Right ventricle myocardium superior (tissue), 1 donor: ENCODE measurements at regions of chr14 and their contacts with region 1.

Region 1: GRCh38 chr14:21103710-21104447 is 3.0 kb downstream of the TMEM253 start:
- DNase-seq: peak; percentile 97
- ATAC-seq: peak; percentile 96

Region 2: DNA sequence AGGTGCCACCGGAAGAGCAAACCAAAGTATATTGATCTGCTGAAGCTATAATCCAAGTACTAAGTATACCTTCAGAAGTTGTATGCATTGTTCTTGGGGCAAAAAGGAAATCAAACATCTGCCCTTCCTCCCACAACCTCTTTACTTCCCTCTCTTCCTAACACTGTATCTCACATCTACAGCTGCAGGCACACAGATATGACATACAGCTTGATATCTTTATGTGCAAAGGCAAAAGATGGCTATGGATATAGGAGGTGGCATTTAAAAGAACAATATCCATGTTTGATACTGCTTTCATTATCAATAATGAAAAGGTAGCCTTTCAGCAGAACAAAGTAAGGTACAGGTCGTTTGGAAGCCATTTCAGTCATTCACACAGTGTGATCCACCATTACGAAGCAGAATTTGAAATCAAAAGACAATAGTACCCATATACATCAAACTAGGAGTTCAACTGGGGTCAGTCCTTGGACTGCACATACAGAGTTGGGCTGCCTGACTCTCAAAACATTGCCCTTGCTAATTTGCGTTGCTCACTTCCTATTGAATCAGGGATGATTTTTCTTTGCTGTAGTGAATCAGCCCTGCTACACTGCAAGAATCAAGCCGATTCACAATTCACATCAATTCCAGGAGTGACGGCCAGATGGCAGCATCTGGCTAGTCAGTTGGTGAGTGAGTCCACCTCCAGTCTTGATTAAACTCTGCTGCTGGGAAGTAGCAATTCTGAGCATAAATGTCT is 406.4 kb before region 1 on chr14:
- intact Hi-C with region 1: loop called (anchors 5 kb)
- DNase-seq: peak; percentile 68
- ATAC-seq: peak; percentile 94

Region 3: GRCh38 chr14:21014761-21015190 is 89.1 kb before region 1 on chr14:
- intact Hi-C with region 1: loop called (anchors 5 kb)
- DNase-seq: peak; percentile 79
- ATAC-seq: peak; percentile 86

Region 4: GRCh38 chr14:21041676-21042433 is 62.0 kb before region 1 on chr14 and contains the start of gene RNASE7:
- intact Hi-C with region 1: no loop called
- DNase-seq: no peak
- ATAC-seq: no peak
- total RNA-seq, gene RNASE7: not detected

Region 5: DNA sequence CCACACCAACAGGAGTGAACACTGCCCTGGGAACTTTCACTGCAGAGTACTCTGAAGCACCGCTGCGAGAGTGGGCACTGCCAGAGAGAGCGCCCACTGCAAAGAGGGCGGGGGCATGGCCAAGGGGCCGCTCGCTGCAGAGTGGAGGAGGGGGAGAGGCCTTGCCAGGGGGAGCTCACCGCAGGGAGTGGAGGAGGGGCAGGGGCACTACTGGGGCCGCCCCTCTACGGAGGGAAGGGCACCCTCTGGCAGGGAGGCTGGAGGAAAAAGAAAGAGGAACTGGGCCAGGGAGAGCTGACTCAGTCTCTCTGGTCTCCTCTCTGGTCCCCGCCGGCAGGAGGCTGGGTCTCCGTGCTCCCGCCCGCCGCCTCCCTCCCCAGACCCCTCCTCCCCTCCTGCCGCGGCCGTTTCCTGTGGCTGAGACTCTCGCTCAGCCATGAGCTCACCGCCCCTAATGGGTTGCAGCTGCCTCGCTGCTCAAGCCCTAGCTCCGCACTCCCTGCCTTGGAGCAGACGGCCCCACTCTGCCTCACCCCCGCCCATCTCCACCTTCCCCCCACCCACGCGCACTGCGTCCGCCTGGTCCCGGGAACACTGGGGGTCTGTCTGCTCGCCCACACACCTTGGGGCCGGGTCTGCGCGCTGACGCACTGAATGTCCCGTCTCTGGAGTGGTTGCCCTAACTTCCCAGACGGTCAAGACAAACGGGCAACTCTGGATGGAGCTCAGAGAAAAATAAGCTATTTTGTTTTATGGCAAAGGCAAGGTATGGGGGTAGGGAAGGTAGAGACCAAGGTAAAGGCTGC is 32.5 kb before region 1 on chr14:
- intact Hi-C with region 1: loop called (anchors 1 kb)
- DNase-seq: peak; percentile 93
- ATAC-seq: peak; percentile 72